Caco-2 (cell line): ENCODE measurements at regions of chr7 and their contacts with region 1.

Region 1: GRCh38 chr7:73828107-73828803 is 2.5 kb upstream of the CLDN4 start:
- DNase-seq: peak; percentile 85 to 95
- H3K4me3 ChIP-seq: peak overlapping the region; percentile 43
- H3K4me3 Mint-ChIP-seq: peak overlapping the region; percentile 75
- H3K27ac Mint-ChIP-seq: peak overlapping the region; percentile 98
- H3K4me1 ChIP-seq: peaks cover 38% of the 10 kb centered on the region
- H3K4me1 Mint-ChIP-seq: peaks cover 51% of the 10 kb centered on the region
- H3K27me3 ChIP-seq: no peaks in the 10 kb centered on the region
- H3K27me3 Mint-ChIP-seq: no peaks in the 10 kb centered on the region
- CTCF ChIP-seq: no peak

Region 2: DNA sequence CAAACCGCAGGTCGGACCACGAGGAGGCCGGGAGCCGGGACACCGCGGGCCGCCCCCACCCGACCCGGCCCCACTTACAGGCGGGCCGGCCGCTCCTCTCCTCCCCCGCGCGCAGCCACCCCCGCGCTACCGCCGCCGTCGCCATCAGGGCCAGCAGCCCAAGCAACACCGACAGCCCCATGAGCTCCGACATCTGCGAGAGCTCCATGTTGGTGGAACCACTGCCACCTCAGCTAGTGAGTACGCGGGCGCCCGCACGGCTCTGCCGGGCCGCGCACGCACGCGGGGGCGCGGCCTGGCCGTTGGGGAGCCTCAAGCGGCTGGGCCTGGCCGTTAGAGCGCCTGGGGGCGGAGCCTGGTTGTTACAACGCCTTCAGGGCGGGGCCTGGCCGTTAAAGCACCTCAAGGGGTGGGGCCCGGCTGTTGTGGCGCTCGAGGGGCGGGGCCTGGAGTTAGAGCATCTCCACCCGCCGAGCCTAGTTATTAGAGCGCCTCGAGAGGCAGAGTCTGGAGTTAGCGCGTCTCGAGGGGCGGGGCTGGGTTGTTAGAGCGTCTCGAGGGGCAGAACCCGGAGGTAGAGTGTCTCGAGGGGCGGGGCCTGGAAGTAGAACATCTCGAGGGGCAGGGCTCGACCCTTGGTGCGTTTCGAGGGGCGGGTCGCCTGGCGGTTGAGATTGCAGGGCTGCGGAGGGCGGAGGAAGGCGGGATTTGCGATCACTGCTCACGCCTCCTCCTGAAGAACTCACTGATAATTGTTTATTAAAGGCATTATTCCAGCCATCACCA is 249.7 kb before region 1 on chr7 and contains the start of gene TBL2:
- CTCF ChIA-PET with region 1: no interaction called
- POLR2A ChIA-PET with region 1: interaction called, 3 read pairs
- intact Hi-C with region 1: loop called (anchors 5 kb)
- DNase-seq: peak; percentile 99
- H3K4me3 ChIP-seq: peak within 1 kb of the TSS; percentile 60
- H3K4me3 Mint-ChIP-seq: peak within 1 kb of the TSS; percentile 95
- H3K27ac Mint-ChIP-seq: peak within 1 kb of the TSS; percentile 92
- H3K4me1 ChIP-seq: peaks cover 8% of the 10 kb centered on the region; the same call in 1 of the 2 replicates
- H3K4me1 Mint-ChIP-seq: peaks cover 8% of the 10 kb centered on the region
- H3K27me3 ChIP-seq: no peaks in the 10 kb centered on the region
- H3K27me3 Mint-ChIP-seq: no peaks in the 10 kb centered on the region
- CTCF ChIP-seq: peak in 1 of 2 experiments; percentile 30
- total RNA-seq, gene TBL2: 74.8 and 76.8 TPM in 2 replicates

Region 3: GRCh38 chr7:73769992-73770859 is 58.0 kb before region 1 on chr7 and contains the start of gene CLDN3:
- CTCF ChIA-PET with region 1: no interaction called
- POLR2A ChIA-PET with region 1: interaction called, 28 read pairs
- intact Hi-C with region 1: loop called (anchors 2 kb)
- DNase-seq: peak; percentile 93 to 94
- H3K4me3 ChIP-seq: peak within 1 kb of the TSS; percentile 66
- H3K4me3 Mint-ChIP-seq: peak within 1 kb of the TSS; percentile 81
- H3K27ac Mint-ChIP-seq: peak within 1 kb of the TSS; percentile 73
- H3K4me1 ChIP-seq: peaks cover 15% of the 10 kb centered on the region
- H3K4me1 Mint-ChIP-seq: peaks cover 18% of the 10 kb centered on the region
- H3K27me3 ChIP-seq: no peaks in the 10 kb centered on the region
- H3K27me3 Mint-ChIP-seq: no peaks in the 10 kb centered on the region
- CTCF ChIP-seq: peak in 1 of 2 experiments; percentile 21
- total RNA-seq, gene CLDN3: 19.6 and 21.0 TPM in 2 replicates

Region 4: DNA sequence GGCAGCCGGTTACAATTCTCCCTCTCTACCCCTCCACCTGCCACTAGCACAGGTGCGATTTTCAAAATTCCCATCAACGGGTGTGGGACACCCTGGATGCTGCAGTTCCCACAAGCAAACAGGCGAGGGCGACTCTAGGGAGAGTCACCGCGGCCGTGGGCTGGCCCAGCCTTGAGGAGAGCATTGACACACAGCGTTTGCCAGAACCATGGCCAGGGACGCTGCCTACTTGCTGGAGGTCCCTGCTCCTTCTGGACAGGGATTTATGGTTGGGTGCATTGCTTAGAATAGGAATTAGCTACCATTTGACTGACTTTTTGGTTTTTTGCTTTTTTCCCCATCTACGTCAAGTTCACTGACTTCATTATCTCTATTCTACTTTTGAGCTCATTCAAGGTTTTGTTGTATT is 16.5 kb before region 1 on chr7:
- CTCF ChIA-PET with region 1: no interaction called
- POLR2A ChIA-PET with region 1: no interaction called
- intact Hi-C with region 1: loop called (anchors 1 kb)
- DNase-seq: peak; percentile 72 to 81
- H3K4me3 ChIP-seq: no peak overlapping the region
- H3K4me3 Mint-ChIP-seq: no peak overlapping the region
- H3K27ac Mint-ChIP-seq: no peak overlapping the region
- H3K4me1 ChIP-seq: peaks cover 5% of the 10 kb centered on the region; the same call in 1 of the 2 replicates
- H3K4me1 Mint-ChIP-seq: peaks cover 7% of the 10 kb centered on the region
- H3K27me3 ChIP-seq: no peaks in the 10 kb centered on the region
- H3K27me3 Mint-ChIP-seq: no peaks in the 10 kb centered on the region
- CTCF ChIP-seq: peak; percentile 67 to 72

Region 5: GRCh38 chr7:73851410-73852234 is 23.4 kb after region 1 on chr7:
- CTCF ChIA-PET with region 1: interaction called, 5 read pairs
- POLR2A ChIA-PET with region 1: interaction called, 12 read pairs
- intact Hi-C with region 1: loop called (anchors 1 kb)
- DNase-seq: no peak
- H3K4me3 ChIP-seq: no peak overlapping the region
- H3K4me3 Mint-ChIP-seq: peak overlapping the region; percentile 8
- H3K27ac Mint-ChIP-seq: peak overlapping the region; percentile 87
- H3K4me1 ChIP-seq: peaks cover 28% of the 10 kb centered on the region
- H3K4me1 Mint-ChIP-seq: peaks cover 38% of the 10 kb centered on the region
- H3K27me3 ChIP-seq: no peaks in the 10 kb centered on the region
- H3K27me3 Mint-ChIP-seq: no peaks in the 10 kb centered on the region
- CTCF ChIP-seq: no peak

Region 6: DNA sequence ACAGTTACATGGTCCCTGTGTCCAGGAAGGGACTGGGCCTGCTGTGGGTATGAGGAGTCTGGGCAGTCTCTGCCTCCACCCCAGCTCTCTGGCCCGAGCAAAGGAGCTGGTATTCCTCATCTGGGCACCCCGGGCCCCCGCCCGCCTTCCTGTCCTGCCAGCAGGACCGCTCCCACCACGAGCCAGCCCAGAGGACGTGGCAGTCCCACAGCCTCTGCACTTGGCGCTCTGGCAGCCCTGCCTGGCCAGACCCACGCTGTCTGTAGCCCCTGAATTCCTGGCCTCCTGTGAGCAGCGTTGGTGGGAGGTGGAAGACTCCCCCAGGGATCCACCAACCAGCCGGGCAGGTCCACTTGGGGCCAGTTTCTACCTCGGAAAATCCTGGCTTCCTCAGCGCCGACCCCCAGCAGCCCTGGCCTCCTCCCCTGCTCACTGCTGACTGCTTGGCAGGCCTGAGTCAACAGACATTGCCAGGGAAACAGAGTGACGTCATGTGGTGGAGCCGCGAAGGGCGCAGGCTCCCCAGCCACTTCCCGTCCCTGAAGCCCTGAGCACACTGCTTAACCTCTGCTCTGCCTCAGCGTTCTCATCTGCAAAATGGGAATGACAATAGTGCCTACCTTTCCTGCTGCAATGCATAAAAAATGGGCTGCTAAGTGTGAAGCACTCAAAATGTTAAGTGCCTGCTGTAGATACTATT is 233.7 kb after region 1 on chr7:
- CTCF ChIA-PET with region 1: no interaction called
- POLR2A ChIA-PET with region 1: no interaction called
- intact Hi-C with region 1: no loop called
- DNase-seq: no peak
- H3K4me3 ChIP-seq: no peak overlapping the region
- H3K4me3 Mint-ChIP-seq: no peak overlapping the region
- H3K27ac Mint-ChIP-seq: peak overlapping the region; percentile 53
- H3K4me1 ChIP-seq: no peaks in the 10 kb centered on the region; the same call in 1 of the 2 replicates
- H3K4me1 Mint-ChIP-seq: no peaks in the 10 kb centered on the region
- H3K27me3 ChIP-seq: no peaks in the 10 kb centered on the region
- H3K27me3 Mint-ChIP-seq: peaks cover 6% of the 10 kb centered on the region
- CTCF ChIP-seq: no peak